Mucosa of descending colon (tissue), 3 donors: ENCODE measurements at regions of chr21 and their contacts with region 1.

Region 1: DNA sequence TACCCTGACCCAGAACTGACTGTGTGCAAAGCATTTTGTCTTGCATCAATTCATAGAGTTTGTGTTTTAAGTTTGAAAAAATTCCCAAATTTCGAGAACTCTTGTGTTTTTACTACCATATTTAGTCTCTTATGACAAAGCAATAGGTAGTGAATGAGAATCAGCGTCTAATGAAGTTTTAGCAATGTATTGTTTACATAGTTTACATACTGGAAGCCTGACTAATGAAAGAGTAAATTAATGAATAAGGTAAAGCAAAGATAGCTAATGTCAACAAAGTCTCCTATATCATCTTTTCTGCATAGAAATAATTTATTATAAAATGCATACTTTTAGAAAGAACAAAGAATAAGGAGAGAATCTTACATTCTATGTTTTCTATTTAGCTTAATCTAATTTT is 1943.6 kb downstream of the NCAM2 start:
- DNase-seq: no peak
- ATAC-seq: no peak
- H3K4me3 ChIP-seq: no peak overlapping the region
- H3K4me1 ChIP-seq: no peaks in the 10 kb centered on the region
- CTCF ChIP-seq: no peak

Region 2: DNA sequence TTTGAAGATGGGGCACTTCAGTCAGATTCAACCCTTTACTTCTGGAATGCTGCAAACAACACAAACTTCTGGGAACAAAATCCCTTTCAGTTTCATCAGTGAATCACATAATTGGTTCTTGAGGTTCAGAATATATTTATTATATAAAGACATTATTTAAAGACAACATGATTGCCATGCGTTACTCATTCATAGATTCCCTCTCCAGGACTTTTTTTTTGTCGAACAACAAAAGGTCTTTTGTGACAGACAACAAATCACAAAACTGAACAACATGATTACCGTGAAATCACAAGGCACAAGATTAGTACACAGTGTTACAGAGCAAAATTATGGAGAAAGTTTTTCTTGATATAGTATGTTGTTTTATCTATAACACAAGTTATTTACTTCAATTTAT is 128.6 kb before region 1 on chr21:
- intact Hi-C with region 1: loop called in 1 of 2 experiments (anchors 5 kb)
- DNase-seq: no peak
- ATAC-seq: no peak
- H3K4me3 ChIP-seq: no peak overlapping the region
- H3K4me1 ChIP-seq: no peaks in the 10 kb centered on the region
- CTCF ChIP-seq: no peak

Region 3: GRCh38 chr21:23003951-23004350 is 62.2 kb after region 1 on chr21:
- intact Hi-C with region 1: no loop called
- DNase-seq: no peak
- ATAC-seq: no peak
- H3K4me3 ChIP-seq: no peak overlapping the region
- H3K4me1 ChIP-seq: no peaks in the 10 kb centered on the region
- CTCF ChIP-seq: no peak